WTC11 (cell line): ENCODE measurements at regions of chr18 and their contacts with region 1.

Region 1: GRCh38 chr18:46660955-46661749 is 4.1 kb upstream of the LOXHD1 start:
- DNase-seq: peak; percentile 67
- ATAC-seq: peak; percentile 62
- H3K4me3 Mint-ChIP-seq: no peak overlapping the region
- H3K27ac Mint-ChIP-seq: no peak overlapping the region
- H3K4me1 Mint-ChIP-seq: peaks cover 19% of the 10 kb centered on the region
- H3K27me3 Mint-ChIP-seq: peaks cover 7% of the 10 kb centered on the region
- CTCF ChIP-seq: no peak

Region 2: DNA sequence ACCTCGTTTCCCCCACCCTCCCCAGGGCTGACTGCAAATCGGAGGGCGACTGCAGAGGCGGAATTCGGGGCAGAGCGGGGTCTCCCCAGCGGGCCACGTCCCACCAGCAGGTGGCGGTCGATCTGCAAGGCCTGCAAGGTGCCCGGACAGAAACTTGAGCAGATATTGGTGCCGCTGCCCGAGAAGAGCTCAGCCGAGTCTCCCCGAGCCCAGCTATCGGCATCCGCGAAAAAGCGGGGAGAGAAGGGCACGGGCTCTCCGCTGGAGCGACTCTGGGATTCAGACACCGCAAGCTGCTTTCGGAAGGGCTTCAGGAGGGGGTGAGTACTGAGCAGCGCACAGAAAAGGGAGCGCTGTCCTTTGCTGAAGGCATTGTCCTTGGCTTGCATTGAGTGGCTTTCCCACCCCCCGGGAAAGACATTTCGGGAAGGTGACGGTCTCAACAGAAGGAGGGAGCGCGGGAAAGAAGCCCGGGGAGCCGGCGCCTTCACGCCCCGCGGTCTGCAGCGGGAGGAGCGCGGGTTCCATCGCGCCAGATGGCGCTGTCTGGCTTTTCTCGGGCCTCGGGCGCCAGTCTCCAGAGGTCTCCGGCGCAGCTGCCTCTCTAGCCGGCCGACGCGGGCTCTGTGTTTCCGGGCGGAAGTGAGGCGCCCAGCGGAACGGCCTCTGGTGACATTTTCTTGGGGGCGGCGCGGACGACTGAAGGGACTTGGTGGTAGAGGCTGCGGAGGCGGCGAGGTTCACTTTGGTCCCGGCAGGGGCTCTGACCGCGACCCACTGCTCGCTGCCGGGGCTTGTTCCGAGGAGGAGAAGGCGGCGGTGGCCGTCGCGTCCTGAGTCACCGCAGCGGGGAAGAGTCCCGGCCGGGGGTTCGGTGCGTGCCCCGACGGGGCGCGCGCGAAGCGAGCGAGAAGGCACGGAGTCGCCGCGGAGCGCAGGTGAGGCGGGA is 487.5 kb before region 1 on chr18:
- CTCF ChIA-PET with region 1: interaction called, 29 read pairs
- POLR2A ChIA-PET with region 1: interaction called, 5 read pairs
- DNase-seq: peak; percentile 97
- ATAC-seq: peak; percentile 85
- H3K4me3 Mint-ChIP-seq: peak overlapping the region; percentile 98
- H3K27ac Mint-ChIP-seq: peak overlapping the region; percentile 98
- H3K4me1 Mint-ChIP-seq: peaks cover 15% of the 10 kb centered on the region
- H3K27me3 Mint-ChIP-seq: no peaks in the 10 kb centered on the region
- CTCF ChIP-seq: peak; percentile 75

Region 3: DNA sequence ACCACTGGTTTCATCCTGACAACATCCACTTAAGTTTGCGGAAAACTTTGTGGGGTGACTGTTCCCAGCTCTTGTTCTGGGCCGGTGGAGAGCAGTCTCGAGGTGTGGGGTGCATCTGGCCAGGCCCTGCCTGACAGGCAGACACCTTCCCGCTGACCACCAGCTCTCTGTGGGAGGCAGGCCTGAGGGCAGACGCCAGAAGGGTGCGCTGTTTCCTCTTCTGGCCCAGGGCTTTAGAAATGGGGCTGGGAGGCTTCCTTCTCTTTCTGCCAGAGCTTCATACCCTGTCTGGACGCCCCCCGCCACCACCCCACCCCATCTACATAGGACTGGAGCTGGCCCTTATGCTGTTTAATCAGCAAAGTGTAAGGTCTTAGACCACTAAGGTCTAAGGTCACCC is 267.9 kb before region 1 on chr18:
- CTCF ChIA-PET with region 1: interaction called, 38 read pairs
- POLR2A ChIA-PET with region 1: no interaction called
- DNase-seq: peak; percentile 82
- ATAC-seq: peak; percentile 93
- H3K4me3 Mint-ChIP-seq: no peak overlapping the region
- H3K27ac Mint-ChIP-seq: no peak overlapping the region
- H3K4me1 Mint-ChIP-seq: no peaks in the 10 kb centered on the region
- H3K27me3 Mint-ChIP-seq: no peaks in the 10 kb centered on the region
- CTCF ChIP-seq: peak; percentile 29; the same call in 1 of the 2 replicates

Region 4: GRCh38 chr18:46481048-46481846 is 179.9 kb before region 1 on chr18:
- CTCF ChIA-PET with region 1: interaction called, 12 read pairs
- POLR2A ChIA-PET with region 1: no interaction called
- DNase-seq: peak; percentile 80
- ATAC-seq: peak; percentile 79
- H3K4me3 Mint-ChIP-seq: no peak overlapping the region
- H3K27ac Mint-ChIP-seq: no peak overlapping the region
- H3K4me1 Mint-ChIP-seq: peaks cover 14% of the 10 kb centered on the region
- H3K27me3 Mint-ChIP-seq: 0 out of 2 replicates have a peak, but pooled peaks cover 3% of the 10 kb centered on the region
- CTCF ChIP-seq: peak; percentile 88

Region 5: DNA sequence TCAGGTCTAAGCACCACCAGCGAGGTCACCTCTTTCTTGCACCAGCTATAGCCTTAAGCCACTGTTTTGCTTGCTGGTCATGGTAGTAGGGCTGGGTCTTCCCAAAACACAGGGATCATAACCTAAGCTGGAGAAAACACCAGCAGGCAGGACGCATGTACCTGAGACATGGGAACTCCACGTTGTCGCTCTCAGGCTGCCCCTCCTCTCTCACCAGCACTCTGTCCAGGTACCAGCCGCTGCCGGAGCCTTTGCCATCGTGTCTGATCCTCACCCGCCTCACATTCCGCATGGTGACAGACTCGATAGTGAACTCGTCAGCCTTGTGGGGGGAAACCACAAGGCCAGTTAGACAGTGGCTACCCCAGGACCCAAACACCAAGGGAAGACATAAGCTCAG is 83.6 kb before region 1 on chr18:
- CTCF ChIA-PET with region 1: interaction called, 12 read pairs
- POLR2A ChIA-PET with region 1: no interaction called
- DNase-seq: no peak
- ATAC-seq: no peak
- H3K4me3 Mint-ChIP-seq: no peak overlapping the region
- H3K27ac Mint-ChIP-seq: no peak overlapping the region
- H3K4me1 Mint-ChIP-seq: peaks cover 4% of the 10 kb centered on the region
- H3K27me3 Mint-ChIP-seq: peaks cover 6% of the 10 kb centered on the region; the same call in 1 of the 2 replicates
- CTCF ChIP-seq: no peak

Region 6: DNA sequence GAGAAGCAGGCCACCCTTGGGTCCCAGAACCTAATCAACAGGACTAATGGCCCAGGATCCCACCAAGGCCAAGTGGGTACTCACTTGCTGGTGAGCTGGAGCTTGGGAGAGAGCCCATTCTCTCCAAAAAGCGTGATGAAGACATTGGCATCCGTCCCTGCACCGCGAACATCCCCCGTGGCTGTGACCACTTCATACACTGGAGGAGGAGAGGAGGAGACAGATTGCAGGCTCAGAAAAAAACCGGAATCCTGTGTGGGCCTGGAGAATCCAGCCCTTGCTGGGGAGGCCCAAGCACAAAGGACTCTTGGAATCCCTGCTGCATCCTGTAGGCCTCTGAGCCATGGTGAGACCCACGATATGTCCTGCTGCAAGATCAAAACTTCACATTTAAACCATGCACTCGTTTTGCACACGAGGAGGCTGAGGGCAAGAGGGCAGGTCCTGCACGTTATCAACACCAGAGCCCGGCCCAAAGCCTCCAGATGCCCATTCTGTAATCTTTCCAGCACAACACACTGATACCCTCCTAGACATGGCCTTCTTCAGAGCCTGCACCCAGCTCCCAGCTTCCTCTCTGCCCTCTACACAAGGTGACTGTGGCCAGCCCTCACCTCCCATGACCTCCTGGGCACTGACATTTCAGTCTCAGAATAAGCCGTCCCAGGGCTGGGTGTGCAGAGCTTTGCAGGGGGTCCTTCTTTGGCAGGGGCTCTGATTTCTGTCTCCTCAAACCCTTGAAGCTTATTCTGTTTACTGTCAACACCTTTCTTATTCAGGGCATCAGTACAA is 11.9 kb before region 1 on chr18:
- CTCF ChIA-PET with region 1: interaction called, 27 read pairs
- POLR2A ChIA-PET with region 1: interaction called, 3 read pairs
- DNase-seq: no peak
- ATAC-seq: no peak
- H3K4me3 Mint-ChIP-seq: no peak overlapping the region
- H3K27ac Mint-ChIP-seq: no peak overlapping the region
- H3K4me1 Mint-ChIP-seq: no peaks in the 10 kb centered on the region
- H3K27me3 Mint-ChIP-seq: no peaks in the 10 kb centered on the region
- CTCF ChIP-seq: no peak

Region 7: GRCh38 chr18:46736135-46736534 is 75.0 kb after region 1 on chr18:
- CTCF ChIA-PET with region 1: no interaction called
- POLR2A ChIA-PET with region 1: no interaction called
- DNase-seq: no peak
- ATAC-seq: no peak
- H3K4me3 Mint-ChIP-seq: no peak overlapping the region
- H3K27ac Mint-ChIP-seq: no peak overlapping the region
- H3K4me1 Mint-ChIP-seq: no peaks in the 10 kb centered on the region
- H3K27me3 Mint-ChIP-seq: peaks cover 3% of the 10 kb centered on the region
- CTCF ChIP-seq: no peak

Region 8: DNA sequence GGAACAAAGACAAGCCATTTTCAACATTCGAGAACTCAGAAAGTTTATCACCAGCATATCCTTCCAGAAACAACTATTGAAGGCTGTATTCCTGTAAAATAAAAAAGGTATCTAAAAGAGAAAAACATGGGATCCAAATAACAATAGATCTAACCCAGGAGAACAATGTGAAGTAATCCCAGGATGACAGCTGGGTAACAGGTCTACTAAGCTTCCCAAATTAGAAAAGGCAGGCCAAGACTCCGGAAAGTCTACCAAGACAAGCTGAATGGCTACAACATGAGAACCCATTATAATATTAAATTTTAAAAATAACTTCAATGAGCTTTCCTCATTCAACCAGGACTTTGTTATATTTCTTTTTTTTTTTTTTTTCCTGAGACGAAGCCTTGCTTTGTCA is 249.7 kb after region 1 on chr18:
- CTCF ChIA-PET with region 1: no interaction called
- POLR2A ChIA-PET with region 1: no interaction called
- DNase-seq: no peak
- ATAC-seq: no peak
- H3K4me3 Mint-ChIP-seq: no peak overlapping the region
- H3K27ac Mint-ChIP-seq: no peak overlapping the region
- H3K4me1 Mint-ChIP-seq: peaks cover 61% of the 10 kb centered on the region
- H3K27me3 Mint-ChIP-seq: no peaks in the 10 kb centered on the region
- CTCF ChIP-seq: no peak